Naive thymus-derived CD4-positive, alpha-beta T cell (primary cell): ENCODE measurements at regions of chr10 and their contacts with region 1.

Region 1: GRCh38 chr10:26437637-26438461 is at the start of gene APBB1IP:
- DNase-seq: peak; percentile 24 to 60 (median 47)
- ATAC-seq: peak; percentile 73
- H3K4me3 ChIP-seq: peak within 1 kb of the TSS; percentile 95
- H3K4me3 Mint-ChIP-seq: peak within 1 kb of the TSS; percentile 80 to 98 (median 95)
- H3K27ac ChIP-seq: peak within 1 kb of the TSS; percentile 91
- H3K27ac Mint-ChIP-seq: peak within 1 kb of the TSS; percentile 91 to 98 (median 97)
- H3K4me1 ChIP-seq: peaks cover 16 to 35% of the 10 kb centered on the region in 2 donors
- H3K4me1 Mint-ChIP-seq: peaks cover 40 to 62% (median 57%) of the 10 kb centered on the region in 7 donors
- H3K27me3 ChIP-seq: no peaks in the 10 kb centered on the region
- H3K27me3 Mint-ChIP-seq: no peaks in the 10 kb centered on the region
- total RNA-seq, gene APBB1IP: 64.7 to 101 (median 88.0) TPM

Region 2: GRCh38 chr10:26391701-26392695 is 45.9 kb before region 1 on chr10:
- CTCF ChIA-PET with region 1: no interaction called
- POLR2A ChIA-PET with region 1: no interaction called
- intact Hi-C with region 1: loop called in 1 of 2 experiments (anchors 5 kb)
- DNase-seq: peak in 5 of 9 donors; percentile 11 to 30 (median 13)
- ATAC-seq: peak; percentile 70
- H3K4me3 ChIP-seq: peak overlapping the region; percentile 33
- H3K4me3 Mint-ChIP-seq: peak overlapping the region in 9 of 10 donors; percentile 49 to 74 (median 66)
- H3K27ac ChIP-seq: no peak overlapping the region
- H3K27ac Mint-ChIP-seq: no peak overlapping the region
- H3K4me1 ChIP-seq: peaks cover 0 to 8% of the 10 kb centered on the region in 2 donors
- H3K4me1 Mint-ChIP-seq: peaks cover 0 to 13% (median 8%) of the 10 kb centered on the region in 7 donors
- H3K27me3 ChIP-seq: peaks cover 0 to 3% of the 10 kb centered on the region in 2 donors
- H3K27me3 Mint-ChIP-seq: peaks cover 8 to 30% (median 18%) of the 10 kb centered on the region in 5 donors

Region 3: DNA sequence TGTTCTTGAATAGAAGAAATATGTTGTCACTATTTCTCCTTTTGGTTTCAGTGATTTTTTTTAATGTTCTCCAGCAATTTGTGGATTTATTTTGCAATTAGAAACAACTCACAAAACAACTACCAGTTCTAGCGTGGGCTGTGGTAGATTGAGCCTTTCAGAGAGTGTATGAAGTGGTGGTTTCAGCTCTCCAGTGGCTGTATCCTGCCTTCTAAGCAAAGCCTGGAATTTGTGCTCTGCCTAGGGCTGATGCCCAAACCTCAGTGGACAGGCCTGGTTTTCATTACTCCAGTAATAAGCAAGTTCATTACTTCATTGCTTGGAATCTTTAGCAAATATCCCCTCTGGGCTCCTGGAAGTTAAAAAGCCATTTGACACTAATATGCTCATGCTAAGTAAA is 36.2 kb after region 1 on chr10:
- CTCF ChIA-PET with region 1: interaction called, 8 read pairs
- POLR2A ChIA-PET with region 1: interaction called, 14 read pairs
- intact Hi-C with region 1: no loop called
- DNase-seq: no peak
- ATAC-seq: peak; percentile 35
- H3K4me3 ChIP-seq: no peak overlapping the region
- H3K4me3 Mint-ChIP-seq: peak overlapping the region in 9 of 10 donors; percentile 59 to 86 (median 71)
- H3K27ac ChIP-seq: peak overlapping the region; percentile 68
- H3K27ac Mint-ChIP-seq: peak overlapping the region; percentile 85 to 98 (median 95)
- H3K4me1 ChIP-seq: peaks cover 84 to 87% of the 10 kb centered on the region in 2 donors
- H3K4me1 Mint-ChIP-seq: peaks cover 70 to 97% (median 86%) of the 10 kb centered on the region in 7 donors
- H3K27me3 ChIP-seq: no peaks in the 10 kb centered on the region
- H3K27me3 Mint-ChIP-seq: no peaks in the 10 kb centered on the region

Region 4: DNA sequence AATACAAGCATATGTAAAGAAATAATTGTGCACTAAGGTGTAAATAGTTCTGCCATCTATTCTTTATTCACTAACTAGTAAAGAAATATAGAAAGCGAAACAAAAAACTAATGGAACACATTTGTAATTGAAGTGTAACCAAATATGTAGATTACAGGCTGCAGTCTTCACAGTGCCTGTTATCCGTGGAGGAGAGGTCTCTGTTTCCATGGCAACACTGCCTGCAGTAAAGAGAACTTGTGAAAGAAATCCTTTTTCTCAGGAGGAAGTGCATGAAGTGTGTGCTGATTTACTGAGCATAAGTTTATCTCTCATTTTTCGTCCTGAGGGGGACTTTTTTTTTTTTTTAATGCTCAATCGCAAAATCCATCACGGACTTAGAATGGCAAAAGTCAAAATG is 102.8 kb after region 1 on chr10:
- CTCF ChIA-PET with region 1: no interaction called
- POLR2A ChIA-PET with region 1: no interaction called
- intact Hi-C with region 1: loop called in 1 of 2 experiments (anchors 5 kb)
- DNase-seq: peak in 1 of 9 donors; percentile 23
- ATAC-seq: no peak
- H3K4me3 ChIP-seq: no peak overlapping the region
- H3K4me3 Mint-ChIP-seq: no peak overlapping the region
- H3K27ac ChIP-seq: no peak overlapping the region
- H3K27ac Mint-ChIP-seq: peak overlapping the region in 8 of 9 donors; percentile 25 to 86 (median 57)
- H3K4me1 ChIP-seq: no peaks in the 10 kb centered on the region
- H3K4me1 Mint-ChIP-seq: peaks cover 8 to 34% (median 24%) of the 10 kb centered on the region in 7 donors
- H3K27me3 ChIP-seq: no peaks in the 10 kb centered on the region
- H3K27me3 Mint-ChIP-seq: no peaks in the 10 kb centered on the region

Region 5: GRCh38 chr10:27099916-27100812 is 662.3 kb after region 1 on chr10 and contains the start of gene ANKRD26:
- CTCF ChIA-PET with region 1: no interaction called
- POLR2A ChIA-PET with region 1: no interaction called
- intact Hi-C with region 1: loop called in 1 of 2 experiments (anchors 5 kb)
- DNase-seq: peak; percentile 92 to 97 (median 95)
- ATAC-seq: peak; percentile 76
- H3K4me3 ChIP-seq: peak within 1 kb of the TSS; percentile 89
- H3K4me3 Mint-ChIP-seq: peak within 1 kb of the TSS; percentile 86 to 97 (median 92)
- H3K27ac ChIP-seq: peak within 1 kb of the TSS; percentile 84
- H3K27ac Mint-ChIP-seq: peak within 1 kb of the TSS; percentile 92 to 99 (median 98)
- H3K4me1 ChIP-seq: peaks cover 18 to 28% of the 10 kb centered on the region in 2 donors
- H3K4me1 Mint-ChIP-seq: peaks cover 30 to 64% (median 51%) of the 10 kb centered on the region in 7 donors
- H3K27me3 ChIP-seq: no peaks in the 10 kb centered on the region
- H3K27me3 Mint-ChIP-seq: peaks cover 0 to 2% (median 0%) of the 10 kb centered on the region in 5 donors
- total RNA-seq, gene ANKRD26: 6.4 to 14.2 (median 8.9) TPM